ENCODE measurements at regions of chr5 and their contacts with region 1.

Region 1: DNA sequence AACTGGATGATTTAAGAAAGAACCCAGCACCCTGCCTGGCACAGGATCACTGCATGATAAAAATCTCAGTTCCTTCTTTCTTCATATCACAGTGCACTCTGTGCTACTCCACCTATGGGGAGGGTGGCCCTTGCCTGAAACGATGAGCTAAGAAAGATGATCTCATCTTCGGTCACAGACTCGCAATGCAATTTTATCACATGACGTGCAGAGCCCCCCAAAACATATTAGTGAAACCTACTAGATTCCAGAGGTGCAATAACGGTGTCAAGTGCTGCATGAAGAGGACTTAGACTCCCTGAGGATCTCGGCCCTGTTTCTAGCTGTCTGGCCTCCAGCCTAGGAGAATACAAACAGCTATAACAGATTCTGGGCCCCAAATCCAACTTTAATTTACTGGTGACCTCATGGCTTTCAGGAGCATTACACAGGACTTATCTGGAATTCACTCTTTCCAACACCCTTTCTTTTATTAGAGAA is 104.0 kb downstream of the EBF1 start:
- DNase-seq: no peak
- H3K4me3 ChIP-seq: no peak overlapping the region
- H3K27ac ChIP-seq: peak overlapping the region; percentile 73 to 78
- H3K4me1 ChIP-seq: peaks cover 5 to 49% of the 10 kb centered on the region in 2 donors
- H3K27me3 ChIP-seq: no peaks in the 10 kb centered on the region
- CTCF ChIP-seq: no peak

Region 2: GRCh38 chr5:158777647-158778350 is 217.9 kb before region 1 on chr5:
- intact Hi-C with region 1: loop called (anchors 5 kb)
- DNase-seq: no peak
- H3K4me3 ChIP-seq: no peak overlapping the region
- H3K27ac ChIP-seq: peak overlapping the region; percentile 54 to 75
- H3K4me1 ChIP-seq: peaks cover 4 to 58% of the 10 kb centered on the region in 2 donors
- H3K27me3 ChIP-seq: no peaks in the 10 kb centered on the region
- CTCF ChIP-seq: no peak

Region 3: DNA sequence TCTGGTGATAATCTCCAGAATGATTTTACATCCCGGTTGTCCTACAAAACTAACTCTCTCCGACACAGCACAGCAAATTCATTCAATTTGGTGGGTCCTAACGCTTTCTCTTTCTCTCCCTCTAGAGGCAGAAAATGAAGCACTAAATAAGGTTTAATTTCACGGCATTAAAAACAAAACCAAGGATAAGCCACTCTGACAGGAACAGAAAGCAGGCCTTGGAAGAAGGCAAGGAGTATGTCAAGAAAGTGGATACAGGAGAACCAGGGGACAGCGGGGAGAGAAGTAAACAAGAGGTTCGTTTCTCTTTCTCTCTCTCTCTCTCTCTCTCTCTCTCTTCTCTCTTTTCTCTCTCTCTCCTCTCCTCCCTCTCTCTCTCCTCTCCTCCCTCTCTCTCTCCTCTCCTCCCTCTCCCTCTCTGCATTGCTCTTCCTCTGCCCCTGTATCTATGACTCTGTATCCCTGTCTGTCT is 54.1 kb after region 1 on chr5:
- intact Hi-C with region 1: loop called (anchors 5 kb)
- DNase-seq: no peak
- H3K4me3 ChIP-seq: peak overlapping the region; percentile 43 to 64
- H3K27ac ChIP-seq: peak overlapping the region; percentile 80 to 87
- H3K4me1 ChIP-seq: peaks cover 4 to 52% of the 10 kb centered on the region in 2 donors
- H3K27me3 ChIP-seq: no peaks in the 10 kb centered on the region
- CTCF ChIP-seq: peak; percentile 35 to 63 (median 44)